Activated CD8-positive, alpha-beta memory T cell treated with anti-CD3 and anti-CD28 coated beads, Interleukin-2, amount 10 ng/mL, durations not matched to agents 7 days and 5 days (primary cell): ENCODE measurements at regions of chr14 and their contacts with region 1.

Region 1: GRCh38 chr14:21723431-21724045 is 49.9 kb upstream of the OR4E1 start:
- DNase-seq: peak; percentile 67
- ATAC-seq: peak; percentile 91
- H3K4me3 Mint-ChIP-seq: peak overlapping the region; percentile 68
- H3K27ac Mint-ChIP-seq: peak overlapping the region; percentile 1
- H3K4me1 Mint-ChIP-seq: peaks cover 5% of the 10 kb centered on the region
- H3K27me3 Mint-ChIP-seq: peaks cover 37% of the 10 kb centered on the region

Region 2: DNA sequence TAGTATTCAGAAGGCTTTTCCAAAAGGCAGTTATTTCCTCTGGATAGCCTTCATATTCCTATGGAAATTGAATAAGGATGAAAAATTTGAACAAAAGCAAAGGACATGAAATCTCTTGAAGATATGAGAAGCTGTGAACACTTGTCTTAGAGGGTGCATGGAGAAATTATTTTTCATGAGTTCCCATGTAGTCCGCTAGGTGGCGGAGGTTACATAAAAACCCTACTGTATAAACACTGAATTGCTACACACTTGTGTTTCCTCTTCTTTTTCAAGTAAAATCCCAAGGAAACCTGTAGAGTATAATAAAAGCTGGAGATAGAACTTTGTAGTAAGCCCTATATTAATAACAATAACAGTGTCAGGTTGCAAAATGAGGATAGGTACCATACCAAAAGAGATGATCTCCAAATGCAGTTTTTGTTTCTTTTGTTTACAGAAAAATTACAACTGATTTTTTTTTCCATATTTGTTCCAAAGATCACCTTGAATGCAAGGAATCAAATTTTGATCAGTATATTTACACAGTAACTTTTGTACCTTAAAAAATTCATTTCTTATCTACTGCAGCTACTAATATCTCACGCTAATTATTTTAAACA is 12.1 kb before region 1 on chr14:
- CTCF ChIA-PET with region 1: interaction called, 13 read pairs
- DNase-seq: no peak
- ATAC-seq: peak; percentile 60
- H3K4me3 Mint-ChIP-seq: peak overlapping the region; percentile 58
- H3K27ac Mint-ChIP-seq: peak overlapping the region; percentile 49
- H3K4me1 Mint-ChIP-seq: peaks cover 9% of the 10 kb centered on the region
- H3K27me3 Mint-ChIP-seq: peaks cover 33% of the 10 kb centered on the region

Region 3: DNA sequence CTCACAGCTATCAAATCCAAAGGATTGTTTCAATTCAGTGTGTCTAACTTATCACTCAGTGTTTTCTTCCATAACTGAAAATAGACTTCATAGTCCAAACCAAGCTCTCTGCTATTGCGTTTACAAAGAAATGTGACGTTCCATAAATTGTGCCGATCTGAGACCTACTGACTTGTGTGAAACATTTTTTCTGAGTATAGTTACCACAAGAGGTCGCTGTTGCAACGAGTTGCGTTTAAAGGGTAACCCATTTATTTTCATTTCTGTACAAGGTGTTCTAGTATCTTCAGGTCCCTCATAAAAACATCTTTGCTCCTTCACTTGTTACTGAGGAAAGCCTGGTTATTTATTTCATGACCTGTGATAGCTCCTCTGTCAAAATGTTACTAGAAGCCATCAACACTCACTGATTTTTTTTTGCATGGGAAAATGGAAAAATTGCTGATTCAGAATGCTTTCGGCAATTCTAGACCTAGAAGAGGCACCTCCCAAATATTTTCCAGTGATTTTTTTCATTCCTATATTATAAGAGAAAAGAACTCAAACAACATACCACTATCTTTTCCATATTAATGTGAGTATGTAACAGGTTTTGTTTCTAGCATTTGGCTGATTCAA is 11.0 kb after region 1 on chr14:
- CTCF ChIA-PET with region 1: interaction called, 27 read pairs
- DNase-seq: peak; percentile 59
- ATAC-seq: peak; percentile 53
- H3K4me3 Mint-ChIP-seq: peak overlapping the region; percentile 64
- H3K27ac Mint-ChIP-seq: peak overlapping the region; percentile 64
- H3K4me1 Mint-ChIP-seq: peaks cover 10% of the 10 kb centered on the region
- H3K27me3 Mint-ChIP-seq: peaks cover 60% of the 10 kb centered on the region

Region 4: DNA sequence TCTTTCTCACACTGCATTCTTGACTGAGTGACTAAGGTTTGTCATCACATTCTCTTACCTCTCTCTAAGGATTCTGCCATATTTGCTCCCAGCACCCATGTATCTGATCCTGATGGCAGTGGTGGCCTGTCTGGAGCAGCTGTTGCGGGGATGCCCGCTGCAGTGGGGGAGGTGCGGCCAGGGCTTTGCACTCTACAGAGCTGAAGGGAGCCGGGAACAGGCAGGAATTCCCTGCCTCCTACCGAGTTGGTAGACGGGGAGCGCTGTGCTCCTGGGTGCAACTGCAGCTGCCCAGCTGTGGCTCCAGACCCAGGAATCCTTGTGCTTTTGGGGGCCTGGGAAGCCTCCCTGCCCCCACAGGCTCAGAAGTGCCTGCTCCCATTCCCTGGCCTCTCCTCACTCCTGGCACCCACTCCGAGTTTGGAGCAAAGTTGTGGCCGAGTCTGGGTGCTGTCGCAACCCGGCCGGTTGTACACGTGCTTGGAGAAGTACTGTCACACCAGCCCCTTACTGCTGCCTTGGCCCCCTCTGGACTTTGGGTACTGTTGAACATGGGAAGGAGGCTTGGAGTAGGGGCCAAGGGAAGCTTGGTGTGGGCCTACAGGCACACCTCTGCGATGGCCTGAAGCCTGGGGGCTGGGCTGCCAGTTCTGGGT is 57.0 kb after region 1 on chr14:
- CTCF ChIA-PET with region 1: no interaction called
- DNase-seq: no peak
- ATAC-seq: no peak
- H3K4me3 Mint-ChIP-seq: no peak overlapping the region
- H3K27ac Mint-ChIP-seq: no peak overlapping the region
- H3K4me1 Mint-ChIP-seq: no peaks in the 10 kb centered on the region
- H3K27me3 Mint-ChIP-seq: peaks cover 11% of the 10 kb centered on the region